ENCODE measurements at regions of chr6 and their contacts with region 1.

Region 1: GRCh38 chr6:33761922-33762629 is 15.4 kb upstream of the IP6K3 start:
- DNase-seq: peak; percentile 18
- H3K4me3 Mint-ChIP-seq: no peak overlapping the region
- H3K27ac Mint-ChIP-seq: no peak overlapping the region
- H3K4me1 Mint-ChIP-seq: no peaks in the 10 kb centered on the region
- H3K27me3 Mint-ChIP-seq: no peaks in the 10 kb centered on the region

Region 2: DNA sequence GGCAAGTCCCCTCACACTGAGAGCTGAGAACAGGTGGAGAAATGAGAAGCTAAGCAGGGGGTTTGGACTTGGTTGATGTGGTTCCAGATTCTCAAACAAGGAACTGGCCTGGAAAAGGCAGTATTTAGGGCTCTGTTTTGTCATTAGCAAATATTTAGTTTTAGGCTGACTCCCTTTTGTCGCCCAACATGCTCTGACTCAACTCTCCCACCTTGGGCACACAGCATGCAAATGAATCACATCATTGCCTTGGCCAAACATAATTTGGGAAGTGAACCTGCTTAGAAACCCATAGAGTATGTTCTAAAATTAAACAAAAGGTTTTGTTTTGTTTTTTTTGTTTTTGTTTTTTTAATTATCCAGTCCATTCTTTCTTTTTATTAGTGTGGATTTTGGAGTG is 41.1 kb before region 1 on chr6:
- intact Hi-C with region 1: loop called (anchors 5 kb)
- DNase-seq: no peak
- H3K4me3 Mint-ChIP-seq: no peak overlapping the region
- H3K27ac Mint-ChIP-seq: no peak overlapping the region
- H3K4me1 Mint-ChIP-seq: peaks cover 2% of the 10 kb centered on the region
- H3K27me3 Mint-ChIP-seq: peaks cover 38% of the 10 kb centered on the region

Region 3: DNA sequence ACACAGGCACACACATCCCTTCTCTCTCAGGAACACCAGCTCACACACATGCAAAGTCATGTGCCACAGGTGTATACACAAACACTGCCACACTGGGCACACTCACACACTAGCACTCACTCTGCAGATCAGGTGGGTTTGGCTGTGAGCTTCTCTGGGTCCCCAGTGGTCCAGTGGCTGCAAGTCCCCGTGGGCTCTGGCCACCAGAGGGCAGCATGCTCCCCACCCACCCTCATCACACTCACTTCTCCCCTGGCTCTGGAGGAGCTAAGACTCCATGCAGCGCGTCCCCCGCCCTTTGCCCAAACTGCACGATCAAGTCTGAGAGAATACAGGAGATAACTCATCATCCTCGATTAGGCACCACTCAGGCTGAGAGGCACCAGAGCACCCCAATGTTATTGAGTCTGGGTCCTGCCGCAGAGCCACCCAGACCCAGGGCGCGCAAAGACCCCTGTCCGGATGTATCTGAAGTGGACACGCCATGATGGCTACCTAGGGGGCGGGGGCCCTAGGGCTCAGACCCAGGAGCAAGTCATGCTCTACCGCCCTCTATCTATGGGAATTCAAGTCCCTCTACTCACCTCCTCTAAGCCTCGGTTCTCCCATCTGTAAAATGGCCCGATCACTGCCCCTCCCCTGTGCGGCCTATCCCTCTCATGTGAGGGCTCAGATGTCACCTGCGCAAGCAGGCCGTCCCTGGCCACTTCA is 293.3 kb after region 1 on chr6:
- intact Hi-C with region 1: no loop called
- DNase-seq: peak; percentile 30
- H3K4me3 Mint-ChIP-seq: no peak overlapping the region
- H3K27ac Mint-ChIP-seq: no peak overlapping the region
- H3K4me1 Mint-ChIP-seq: no peaks in the 10 kb centered on the region
- H3K27me3 Mint-ChIP-seq: no peaks in the 10 kb centered on the region